Posterior vena cava (tissue), 2 donors: ENCODE measurements at regions of chr5 and their contacts with region 1.

Region 1: DNA sequence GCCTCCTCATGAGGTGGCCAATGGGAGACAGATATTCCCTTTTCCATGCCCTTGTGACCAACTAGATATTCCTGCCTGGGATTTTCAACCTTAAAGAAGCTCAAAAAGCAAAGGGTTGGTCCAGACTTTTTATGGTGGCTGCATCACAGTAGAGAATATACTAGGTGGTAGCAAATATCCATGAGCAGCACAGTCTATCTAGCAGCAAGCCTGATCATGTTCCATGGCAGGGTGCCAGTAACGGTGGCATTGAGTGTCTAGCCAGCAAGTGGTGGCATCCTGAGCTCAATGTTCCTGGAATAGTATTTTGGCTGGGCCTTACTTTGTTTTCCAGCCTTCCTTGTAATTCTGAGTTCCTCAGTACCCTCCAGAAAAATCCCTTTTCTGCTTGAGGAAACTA is 25.8 kb downstream of the CDC25C start:
- DNase-seq: no peak

Region 2: GRCh38 chr5:137708796-137709559 is 596.8 kb before region 1 on chr5:
- intact Hi-C with region 1: loop called in 1 of 2 experiments (anchors 5 kb)
- DNase-seq: no peak